A673 (cell line): ENCODE measurements at regions of chr13 and their contacts with region 1.

Region 1: DNA sequence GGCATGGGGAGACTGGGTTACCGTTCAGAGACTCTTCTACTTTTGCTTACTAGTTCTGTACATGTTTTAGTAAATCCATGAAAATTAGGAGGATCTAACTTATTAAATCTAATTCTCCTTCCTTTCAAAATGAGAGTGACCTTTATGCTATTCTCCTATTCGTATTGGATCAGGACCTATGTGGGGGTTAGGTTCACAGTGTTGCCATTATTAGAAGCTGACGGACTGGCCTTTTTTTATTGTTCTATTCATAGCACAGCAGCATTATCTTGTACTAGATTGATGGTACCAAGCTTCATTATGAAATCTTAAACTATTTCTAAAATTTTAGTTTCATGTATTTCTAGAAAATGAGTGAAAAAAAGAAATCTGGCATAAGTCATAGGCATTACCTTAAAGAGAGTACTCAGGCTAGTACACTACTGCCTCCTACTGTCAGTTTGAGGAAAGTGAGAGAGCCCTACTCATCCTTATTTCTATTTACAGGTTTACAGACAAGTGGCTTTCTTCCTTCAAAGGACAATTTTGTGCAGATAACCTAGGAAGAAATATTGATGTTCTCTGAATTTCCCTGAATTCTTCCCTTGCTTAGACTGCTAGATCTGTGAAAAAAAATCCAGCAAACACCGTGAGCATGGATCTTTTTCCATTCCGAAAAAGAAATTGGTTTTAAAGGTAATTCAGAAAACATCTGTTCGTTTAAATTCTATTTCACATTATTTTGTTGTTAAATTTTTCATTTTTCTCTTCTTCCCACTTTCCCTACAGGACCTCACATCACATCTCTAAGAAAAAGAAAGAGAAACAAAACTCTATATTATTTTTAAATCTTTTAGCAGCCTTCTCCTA is 485.5 kb downstream of the DIAPH3 start:
- DNase-seq: peak; percentile 84
- H3K4me3 ChIP-seq: no peak overlapping the region
- H3K27ac ChIP-seq: peak overlapping the region; percentile 88
- H3K4me1 ChIP-seq: peaks cover 77% of the 10 kb centered on the region
- H3K27me3 ChIP-seq: no peaks in the 10 kb centered on the region
- CTCF ChIP-seq: peak; percentile 90

Region 2: DNA sequence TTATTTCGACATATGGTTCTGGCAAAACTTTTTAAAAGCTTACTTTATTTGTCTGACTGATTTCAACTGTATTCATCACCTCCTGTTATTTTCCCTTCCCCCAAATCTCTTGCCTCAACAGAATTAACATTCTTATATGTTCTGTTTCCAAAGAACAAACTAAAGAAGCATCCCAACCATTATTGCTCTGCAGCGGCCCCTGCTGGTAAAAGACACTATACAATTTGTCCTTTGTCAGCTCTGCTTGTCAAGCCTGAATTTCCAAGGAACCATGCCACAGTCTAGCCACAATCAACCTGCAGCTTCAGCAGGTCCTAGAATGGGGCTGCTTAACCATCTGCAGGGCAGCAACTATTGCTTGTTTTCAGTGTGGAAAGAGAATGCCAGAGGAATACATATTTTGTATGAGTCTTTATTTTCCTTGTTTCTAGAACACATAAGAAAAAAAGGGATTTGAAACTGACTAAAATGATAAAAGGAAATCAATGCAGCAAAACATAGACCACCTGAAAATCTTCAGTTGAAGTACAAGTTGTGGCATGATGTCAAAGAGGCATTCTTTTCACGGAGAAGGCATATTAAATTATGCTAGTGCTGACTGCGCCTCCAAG is 359.8 kb before region 1 on chr13:
- CTCF ChIA-PET with region 1: interaction called, 3 read pairs
- POLR2A ChIA-PET with region 1: no interaction called
- intact Hi-C with region 1: loop called (anchors 5 kb)
- DNase-seq: peak; percentile 93
- H3K4me3 ChIP-seq: no peak overlapping the region
- H3K27ac ChIP-seq: peak overlapping the region; percentile 24
- H3K4me1 ChIP-seq: peaks cover 32% of the 10 kb centered on the region
- H3K27me3 ChIP-seq: no peaks in the 10 kb centered on the region
- CTCF ChIP-seq: peak; percentile 88

Region 3: DNA sequence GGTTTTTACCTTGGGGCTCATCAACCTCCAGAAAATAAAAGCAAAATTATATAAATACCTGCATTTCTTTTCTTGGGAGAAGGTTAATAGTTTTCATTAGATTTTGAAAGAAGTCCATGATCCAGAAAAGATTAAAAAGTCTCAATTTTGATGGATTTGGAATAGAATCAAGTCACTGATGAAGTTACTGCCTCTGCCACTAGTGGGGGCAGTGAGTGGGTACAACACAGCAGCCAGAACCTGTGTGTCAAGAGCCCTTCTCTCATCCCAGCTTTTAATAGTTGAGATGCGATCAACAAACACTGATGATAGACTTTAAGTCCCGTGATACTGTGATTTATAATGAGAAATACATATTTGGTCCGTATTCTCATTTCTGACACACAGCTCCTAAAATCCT is 201.2 kb before region 1 on chr13:
- CTCF ChIA-PET with region 1: no interaction called
- POLR2A ChIA-PET with region 1: no interaction called
- intact Hi-C with region 1: loop called (anchors 5 kb)
- DNase-seq: no peak
- H3K4me3 ChIP-seq: no peak overlapping the region
- H3K27ac ChIP-seq: no peak overlapping the region
- H3K4me1 ChIP-seq: peaks cover 55% of the 10 kb centered on the region
- H3K27me3 ChIP-seq: no peaks in the 10 kb centered on the region
- CTCF ChIP-seq: peak; percentile 56

Region 4: GRCh38 chr13:59771272-59771671 is 93.1 kb after region 1 on chr13:
- CTCF ChIA-PET with region 1: interaction called, 3 read pairs
- POLR2A ChIA-PET with region 1: no interaction called
- intact Hi-C with region 1: loop called (anchors 1 kb)
- DNase-seq: peak; percentile 73
- H3K4me3 ChIP-seq: no peak overlapping the region
- H3K27ac ChIP-seq: peak overlapping the region; percentile 70
- H3K4me1 ChIP-seq: peaks cover 83% of the 10 kb centered on the region
- H3K27me3 ChIP-seq: no peaks in the 10 kb centered on the region
- CTCF ChIP-seq: peak; percentile 80

Region 5: GRCh38 chr13:60099631-60100420 is 421.6 kb after region 1 on chr13:
- CTCF ChIA-PET with region 1: no interaction called
- POLR2A ChIA-PET with region 1: interaction called, 16 read pairs
- intact Hi-C with region 1: loop called (anchors 2 kb)
- DNase-seq: peak; percentile 96
- H3K4me3 ChIP-seq: peak overlapping the region; percentile 5
- H3K27ac ChIP-seq: peak overlapping the region; percentile 100
- H3K4me1 ChIP-seq: peaks cover 94% of the 10 kb centered on the region
- H3K27me3 ChIP-seq: no peaks in the 10 kb centered on the region
- CTCF ChIP-seq: no peak